ENCODE measurements at regions of chr3 and their contacts with region 1.

Region 1: DNA sequence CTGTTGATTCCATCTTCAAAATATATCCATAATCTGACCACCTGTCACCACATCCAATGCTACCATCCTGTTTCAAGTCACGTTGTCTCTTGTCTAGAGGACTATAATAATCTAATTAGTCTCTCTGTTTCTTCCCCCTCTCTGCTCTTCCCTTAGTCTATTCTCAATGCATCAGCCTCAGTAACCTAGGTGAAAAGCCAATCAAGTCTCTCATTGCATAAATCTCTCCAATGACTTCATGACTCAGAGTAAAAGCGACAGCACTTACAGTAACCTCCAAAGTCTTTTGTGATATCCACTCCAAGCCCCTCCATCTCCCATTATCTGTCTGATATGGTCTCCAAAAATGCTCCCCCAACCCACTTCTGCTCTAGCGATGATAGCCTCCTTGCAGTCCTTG is 7.2 kb downstream of the UBA3 start:
- DNase-seq: no peak
- H3K4me3 ChIP-seq: no peak overlapping the region
- CTCF ChIP-seq: no peak

Region 2: DNA sequence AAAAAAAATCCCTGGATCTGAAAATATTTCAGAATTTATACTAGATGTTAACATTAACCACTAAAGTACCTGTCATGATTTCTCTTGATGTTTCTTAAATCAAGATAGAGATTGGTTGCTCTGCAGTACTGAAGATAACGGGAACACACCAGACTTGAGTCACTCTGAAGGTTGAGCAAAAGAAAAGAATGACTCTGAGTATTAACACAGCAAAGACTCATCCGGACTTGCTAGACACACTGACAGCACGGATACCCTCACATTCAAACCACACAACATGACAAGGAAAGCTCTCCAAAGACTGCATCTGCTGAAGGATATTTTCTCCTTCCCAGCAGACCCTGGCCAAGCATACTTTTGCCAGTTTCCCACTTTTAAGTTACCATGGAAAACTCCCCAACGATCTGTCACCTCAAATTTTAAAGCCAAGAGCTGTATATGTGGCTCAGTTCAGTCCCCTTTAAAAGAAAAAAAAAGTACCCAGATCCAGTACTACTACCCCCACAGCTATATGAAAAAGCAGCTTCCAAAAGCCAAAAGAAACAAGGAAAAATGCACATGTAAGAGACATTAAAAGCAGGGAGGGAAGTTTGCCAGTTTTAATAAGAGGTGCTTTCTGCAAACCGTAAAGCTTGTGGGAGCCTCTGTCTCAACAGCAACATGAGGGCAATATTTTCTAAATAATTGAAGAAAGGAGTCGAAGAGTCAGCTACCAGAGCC is 67.7 kb before region 1 on chr3:
- in situ Hi-C with region 1: no loop called
- DNase-seq: no peak
- H3K4me3 ChIP-seq: no peak overlapping the region
- CTCF ChIP-seq: no peak

Region 3: DNA sequence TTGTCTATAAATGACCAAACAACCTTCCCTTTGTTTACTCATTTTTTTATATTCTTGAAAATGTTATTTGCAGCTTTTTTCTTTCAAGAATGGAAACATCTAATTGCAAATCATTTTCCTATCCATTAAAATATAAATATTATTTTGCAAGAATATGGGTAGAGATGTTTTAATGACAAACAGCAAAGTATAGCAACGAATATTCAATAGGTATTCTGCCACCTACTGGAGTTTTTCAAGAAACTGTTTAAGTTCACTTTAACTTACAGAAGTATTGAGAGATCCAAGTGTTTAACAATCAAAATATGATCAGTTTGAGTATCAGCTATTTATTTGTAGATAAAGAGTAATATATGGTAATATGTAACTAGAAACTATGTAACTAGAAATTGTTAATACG is 52.5 kb before region 1 on chr3:
- in situ Hi-C with region 1: loop called (anchors 5 kb)
- DNase-seq: no peak
- H3K4me3 ChIP-seq: no peak overlapping the region
- CTCF ChIP-seq: no peak

Region 4: DNA sequence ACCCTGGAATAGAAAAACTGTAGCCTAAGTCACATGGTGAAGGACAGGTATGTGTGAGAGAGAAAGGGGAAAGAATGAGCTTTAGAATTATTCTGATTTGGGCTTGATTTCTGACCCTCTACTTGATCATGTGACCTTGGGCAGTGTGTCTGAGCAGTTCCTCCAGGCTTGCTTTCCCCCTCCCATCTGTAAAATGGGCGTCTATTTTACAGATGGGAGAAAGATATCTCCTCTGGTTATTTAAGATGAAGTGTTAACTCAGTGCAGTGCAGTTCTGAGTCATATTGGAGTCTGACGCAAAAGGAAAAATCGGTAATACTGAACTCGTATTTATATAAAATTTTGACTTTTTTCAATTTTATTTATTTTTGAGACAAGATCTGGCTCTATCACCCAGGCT is 87.6 kb after region 1 on chr3:
- in situ Hi-C with region 1: no loop called
- DNase-seq: no peak
- H3K4me3 ChIP-seq: no peak overlapping the region
- CTCF ChIP-seq: no peak

Measured in astrocyte of the cerebellum (primary cell).